ENCODE measurements at regions of chr7 and their contacts with region 1.

Region 1: DNA sequence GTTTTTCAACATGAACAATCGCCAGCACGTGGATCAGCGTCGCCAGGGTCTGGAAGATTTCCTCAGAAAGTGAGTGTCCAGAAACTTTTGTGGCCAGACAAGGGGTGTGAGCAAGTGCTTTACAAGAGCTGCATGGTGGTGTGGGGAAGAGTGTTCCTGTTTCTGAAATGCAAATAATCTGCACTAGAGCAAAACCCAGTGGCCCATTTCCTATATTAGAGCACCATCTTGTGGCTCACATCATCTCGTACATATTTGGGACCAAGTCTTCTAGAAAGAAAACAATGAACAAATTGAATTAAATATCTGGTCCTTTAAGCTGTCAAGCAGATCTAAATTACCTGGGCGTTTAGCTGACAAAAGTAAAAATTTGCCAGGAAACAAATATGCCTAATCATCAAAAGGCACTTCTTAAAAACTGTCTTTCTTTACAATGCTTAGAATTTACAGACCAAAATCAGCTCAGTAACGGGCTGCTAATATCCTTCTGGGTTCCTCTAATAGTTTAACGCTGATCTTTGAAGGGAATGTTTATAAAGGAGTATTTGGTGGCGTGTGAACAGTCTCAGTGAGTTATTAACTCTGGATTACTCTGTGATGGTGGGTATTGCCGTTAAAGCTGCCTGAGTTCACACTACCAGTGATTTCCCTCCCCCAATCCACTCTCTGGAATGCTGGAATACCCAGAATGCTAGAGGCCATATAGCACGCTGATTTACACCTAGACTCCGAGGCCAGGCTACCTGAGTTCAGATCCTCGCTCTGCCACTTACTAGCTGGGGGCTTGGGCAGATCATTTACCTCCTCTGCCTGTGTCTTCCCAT is 73.6 kb downstream of the SNX10 start:
- DNase-seq: peak; percentile 65
- ATAC-seq: peak; percentile 69; the same call in 2 of the 3 replicates
- H3K4me3 ChIP-seq: no peak overlapping the region
- H3K27ac ChIP-seq: no peak overlapping the region
- H3K4me1 ChIP-seq: peaks cover 37% of the 10 kb centered on the region
- H3K27me3 ChIP-seq: no peaks in the 10 kb centered on the region
- CTCF ChIP-seq: peak; percentile 81
- EP300 ChIP-seq: no peak
- POLR2A ChIP-seq: no peak
- RAD21 ChIP-seq: peak; percentile 82

Region 2: DNA sequence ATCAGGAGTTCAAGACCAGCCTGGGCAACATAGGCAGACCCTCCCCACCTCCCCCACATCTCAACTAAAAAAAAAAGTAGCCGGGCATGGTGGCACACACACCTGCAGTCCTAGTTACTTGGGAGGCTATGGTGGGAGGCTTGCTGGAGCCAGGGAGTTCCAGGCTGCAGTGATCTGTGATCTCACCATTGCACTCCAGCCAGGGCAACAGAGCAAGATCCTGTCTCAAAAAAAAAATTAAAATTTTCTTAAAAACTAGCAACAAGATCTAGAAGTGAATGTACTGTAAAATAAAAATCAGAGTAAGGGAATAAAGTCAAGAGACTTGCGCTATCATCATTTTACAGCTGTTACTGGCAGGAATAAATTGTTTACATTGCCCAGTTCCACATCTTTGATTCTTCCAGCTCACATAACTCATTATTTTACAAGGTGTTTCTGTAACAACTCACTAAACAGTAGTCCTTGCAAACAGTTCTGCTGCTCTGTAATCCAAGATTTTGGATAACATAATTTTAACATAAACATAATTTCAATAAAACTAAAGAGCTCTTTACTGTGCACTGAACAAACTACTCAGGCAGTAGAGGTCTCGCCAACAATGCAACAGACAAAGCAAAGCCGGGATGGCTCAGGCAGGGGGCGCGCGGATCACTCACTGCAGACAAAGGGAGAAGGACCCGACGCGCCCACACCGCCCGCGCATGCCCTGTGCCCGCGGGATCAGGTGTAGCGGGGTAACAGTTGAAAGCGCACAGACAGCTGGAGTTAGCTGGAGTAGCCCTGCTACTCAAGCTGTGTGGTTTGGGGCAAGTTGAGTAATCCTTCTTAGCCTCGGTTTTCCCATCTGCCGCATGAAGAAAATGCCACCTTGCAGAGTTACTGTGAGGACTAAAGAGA is 286.6 kb before region 1 on chr7:
- CTCF ChIA-PET with region 1: interaction called, 5 read pairs
- POLR2A ChIA-PET with region 1: no interaction called
- in situ Hi-C with region 1: no loop called
- intact Hi-C with region 1: loop called (anchors 5 kb)
- DNase-seq: peak; percentile 57
- ATAC-seq: peak; percentile 98
- H3K4me3 ChIP-seq: peak overlapping the region in 1 of 3 experiments; percentile 30; a peak in 1 of 6 replicates
- H3K27ac ChIP-seq: no peak overlapping the region
- H3K4me1 ChIP-seq: peaks cover 28% of the 10 kb centered on the region
- H3K27me3 ChIP-seq: no peaks in the 10 kb centered on the region
- CTCF ChIP-seq: peak; percentile 84
- EP300 ChIP-seq: no peak
- POLR2A ChIP-seq: no peak
- RAD21 ChIP-seq: peak; percentile 65; the same call in 1 of the 2 replicates

Region 3: DNA sequence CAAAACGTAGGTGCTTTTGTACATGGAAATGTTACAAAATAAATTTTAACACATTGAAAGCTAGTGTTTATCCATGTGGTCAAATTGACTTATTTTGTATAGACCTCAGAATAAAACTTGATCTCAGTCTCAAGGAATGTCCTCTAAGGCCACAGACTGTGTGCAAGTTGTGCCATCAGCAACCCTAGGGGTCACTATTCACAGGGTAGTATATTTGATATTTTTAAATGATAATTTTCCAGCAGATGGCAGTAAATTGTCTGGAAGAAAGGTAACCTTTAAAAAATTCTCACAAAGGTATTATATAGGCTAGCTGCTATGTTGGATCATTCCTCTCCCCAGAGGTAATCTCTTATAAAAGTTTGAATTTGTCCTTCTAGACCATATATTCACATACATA is 86.5 kb before region 1 on chr7:
- CTCF ChIA-PET with region 1: interaction called, 20 read pairs
- POLR2A ChIA-PET with region 1: interaction called, 3 read pairs
- in situ Hi-C with region 1: no loop called
- intact Hi-C with region 1: loop called (anchors 1 kb)
- DNase-seq: peak; percentile 49
- ATAC-seq: peak; percentile 79
- H3K4me3 ChIP-seq: peak overlapping the region in 2 of 3 experiments; percentile 58 to 64; a peak in 4 of 6 replicates
- H3K27ac ChIP-seq: no peak overlapping the region
- H3K4me1 ChIP-seq: peaks cover 21% of the 10 kb centered on the region
- H3K27me3 ChIP-seq: no peaks in the 10 kb centered on the region
- CTCF ChIP-seq: peak; percentile 51
- EP300 ChIP-seq: no peak
- POLR2A ChIP-seq: no peak
- RAD21 ChIP-seq: no peak

Region 4: DNA sequence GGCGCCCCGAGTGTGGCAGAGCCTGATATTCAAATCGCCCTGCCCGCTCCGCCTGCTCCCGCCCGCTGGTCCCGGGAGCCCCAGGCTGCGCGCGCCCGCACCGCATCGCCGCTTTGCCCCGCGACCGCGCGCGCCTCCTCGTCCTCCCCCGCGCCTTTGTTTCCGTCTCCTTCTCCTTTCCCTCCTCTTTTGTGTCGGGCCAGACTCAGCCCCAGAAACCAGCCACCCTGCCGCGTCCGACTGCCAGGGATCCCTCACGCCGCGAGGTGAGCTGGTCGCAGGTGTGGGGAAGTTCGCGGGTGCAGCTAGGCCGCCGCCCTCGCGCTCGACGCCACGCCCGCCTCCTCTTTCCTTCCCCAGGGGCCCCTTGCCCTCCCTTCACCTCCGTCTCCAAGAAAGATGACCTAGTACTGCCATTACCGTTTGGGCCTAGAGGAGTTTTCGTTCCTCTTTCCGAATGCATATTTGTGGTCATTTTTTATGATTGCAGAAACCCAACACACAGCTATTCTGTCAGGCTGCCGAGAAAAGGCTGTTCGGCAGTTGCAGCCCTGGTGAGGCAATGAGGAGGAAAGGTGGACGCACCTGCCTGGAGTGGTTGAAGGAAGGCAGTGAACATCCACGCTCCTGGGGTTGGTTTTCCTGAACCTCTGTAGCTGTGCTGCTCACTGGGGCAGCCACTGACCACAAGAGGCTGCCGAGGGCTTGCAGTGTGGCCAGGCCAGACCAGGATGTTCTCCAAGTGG is 33.6 kb after region 1 on chr7:
- CTCF ChIA-PET with region 1: no interaction called
- POLR2A ChIA-PET with region 1: no interaction called
- in situ Hi-C with region 1: no loop called
- intact Hi-C with region 1: no loop called
- DNase-seq: no peak
- ATAC-seq: peak; percentile 86
- H3K4me3 ChIP-seq: peak overlapping the region; percentile 57 to 69 (median 62)
- H3K27ac ChIP-seq: no peak overlapping the region
- H3K4me1 ChIP-seq: peaks cover 24% of the 10 kb centered on the region
- H3K27me3 ChIP-seq: peaks cover 0 to 27% of the 10 kb centered on the region in 2 experiments; a peak in 3 of 5 replicates
- CTCF ChIP-seq: peak; percentile 44
- EP300 ChIP-seq: no peak
- POLR2A ChIP-seq: no peak
- RAD21 ChIP-seq: no peak

Region 5: GRCh38 chr7:26500749-26501352 is 135.6 kb after region 1 on chr7:
- CTCF ChIA-PET with region 1: no interaction called
- POLR2A ChIA-PET with region 1: no interaction called
- in situ Hi-C with region 1: no loop called
- intact Hi-C with region 1: loop called (anchors 2 kb)
- DNase-seq: peak; percentile 22
- ATAC-seq: no peak; the same call in 2 of the 3 replicates
- H3K4me3 ChIP-seq: no peak overlapping the region
- H3K27ac ChIP-seq: no peak overlapping the region
- H3K4me1 ChIP-seq: no peaks in the 10 kb centered on the region; the same call in 1 of the 2 replicates
- H3K27me3 ChIP-seq: peaks cover 0 to 22% of the 10 kb centered on the region in 2 experiments; a peak in 2 of 5 replicates
- CTCF ChIP-seq: peak; percentile 45
- EP300 ChIP-seq: no peak
- POLR2A ChIP-seq: no peak
- RAD21 ChIP-seq: no peak

Region 6: GRCh38 chr7:27160546-27161213 is 795.4 kb after region 1 on chr7:
- CTCF ChIA-PET with region 1: interaction called, 13 read pairs
- POLR2A ChIA-PET with region 1: no interaction called
- in situ Hi-C with region 1: loop called (anchors 5 kb)
- intact Hi-C with region 1: loop called (anchors 1 kb)
- DNase-seq: peak; percentile 62
- ATAC-seq: peak; percentile 91
- H3K4me3 ChIP-seq: peak overlapping the region; percentile 51 to 68 (median 66)
- H3K27ac ChIP-seq: no peak overlapping the region
- H3K4me1 ChIP-seq: peaks cover 8% of the 10 kb centered on the region; the same call in 1 of the 2 replicates
- H3K27me3 ChIP-seq: peaks cover 2 to 44% of the 10 kb centered on the region in 2 experiments
- CTCF ChIP-seq: peak; percentile 97
- EP300 ChIP-seq: no peak
- POLR2A ChIP-seq: no peak
- RAD21 ChIP-seq: peak; percentile 97

Measured in HepG2 (cell line).